GM18951 (cell line): ENCODE measurements at regions of chr2 and their contacts with region 1.

Region 1: DNA sequence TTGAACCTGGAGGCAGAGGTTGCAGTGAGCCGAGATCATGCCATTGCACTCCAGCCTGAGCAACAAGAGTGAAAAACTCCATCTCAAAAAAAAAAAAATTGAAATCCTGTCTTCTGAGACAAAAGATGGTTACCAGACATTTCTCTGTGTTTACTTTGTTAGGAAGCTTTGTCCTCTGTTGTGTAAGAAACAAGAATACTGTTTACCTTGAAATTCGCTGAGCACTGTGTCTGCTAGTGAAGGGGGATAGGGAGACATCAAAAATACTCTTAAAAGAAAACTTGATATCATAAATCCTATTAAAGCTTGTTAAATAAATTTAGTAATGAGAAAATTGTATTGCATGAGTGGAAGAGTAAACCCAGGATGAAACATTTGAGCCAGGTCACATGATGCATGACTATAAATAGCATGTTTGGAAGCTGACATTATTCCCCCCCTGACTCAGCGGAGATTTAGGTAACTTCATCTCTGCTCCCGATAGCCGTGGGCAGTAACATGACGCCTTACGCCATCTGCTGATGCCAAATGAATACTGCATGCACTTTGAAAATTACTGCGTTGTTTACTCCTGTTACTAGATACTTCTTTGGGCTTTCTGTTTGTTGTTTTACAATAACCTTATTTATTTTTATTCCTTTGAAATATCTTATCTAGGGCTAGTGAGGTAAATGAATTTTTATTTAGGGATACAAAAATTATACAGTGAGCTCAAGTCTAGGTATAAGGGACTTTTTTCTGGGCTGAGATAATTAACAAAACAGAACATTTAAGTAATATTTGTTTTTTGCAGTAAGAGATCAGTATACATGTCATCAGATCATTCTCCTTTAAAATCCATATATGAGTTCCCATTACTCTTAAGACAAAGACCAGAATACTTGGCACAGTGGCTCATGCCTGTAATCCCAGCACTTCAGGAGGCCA is 134.9 kb downstream of the MAP3K20 start:
- POLR2A ChIP-seq: no peak

Region 2: GRCh38 chr2:173027181-173028128 is 183.1 kb before region 1 on chr2:
- in situ Hi-C with region 1: loop called (anchors 5 kb)
- POLR2A ChIP-seq: no peak

Region 3: GRCh38 chr2:173059927-173060565 is 150.5 kb before region 1 on chr2:
- in situ Hi-C with region 1: no loop called
- POLR2A ChIP-seq: no peak